ENCODE measurements at regions of chr16 and their contacts with region 1.

Region 1: GRCh38 chr16:12971241-12971640 is 69.8 kb downstream of the SHISA9 start:
- DNase-seq: no peak
- H3K4me3 ChIP-seq: no peak overlapping the region
- H3K27ac ChIP-seq: no peak overlapping the region
- H3K4me1 ChIP-seq: no peaks in the 10 kb centered on the region
- H3K27me3 ChIP-seq: no peaks in the 10 kb centered on the region
- CTCF ChIP-seq: no peak
- EP300 ChIP-seq: no peak
- POLR2A ChIP-seq: no peak

Region 2: GRCh38 chr16:12917653-12918052 is 53.6 kb before region 1 on chr16:
- in situ Hi-C with region 1: loop called in 1 of 4 experiments (anchors 10 kb)
- intact Hi-C with region 1: no loop called
- DNase-seq: no peak
- H3K4me3 ChIP-seq: no peak overlapping the region
- H3K27ac ChIP-seq: no peak overlapping the region
- H3K4me1 ChIP-seq: no peaks in the 10 kb centered on the region
- H3K27me3 ChIP-seq: no peaks in the 10 kb centered on the region
- CTCF ChIP-seq: no peak
- EP300 ChIP-seq: no peak
- POLR2A ChIP-seq: no peak

Region 3: GRCh38 chr16:12951392-12951791 is 19.8 kb before region 1 on chr16:
- in situ Hi-C with region 1: no loop called
- intact Hi-C with region 1: no loop called
- DNase-seq: no peak
- H3K4me3 ChIP-seq: no peak overlapping the region
- H3K27ac ChIP-seq: no peak overlapping the region
- H3K4me1 ChIP-seq: no peaks in the 10 kb centered on the region
- H3K27me3 ChIP-seq: no peaks in the 10 kb centered on the region
- CTCF ChIP-seq: no peak
- EP300 ChIP-seq: no peak
- POLR2A ChIP-seq: no peak

Region 4: GRCh38 chr16:13041646-13042290 is 70.5 kb after region 1 on chr16:
- in situ Hi-C with region 1: no loop called
- intact Hi-C with region 1: no loop called
- DNase-seq: no peak
- H3K4me3 ChIP-seq: no peak overlapping the region
- H3K27ac ChIP-seq: peak overlapping the region in 1 of 4 donors; percentile 17
- H3K4me1 ChIP-seq: no peaks in the 10 kb centered on the region
- H3K27me3 ChIP-seq: no peaks in the 10 kb centered on the region
- CTCF ChIP-seq: no peak
- EP300 ChIP-seq: no peak
- POLR2A ChIP-seq: no peak